ENCODE measurements at regions of chr3 and their contacts with region 1.

Region 1: DNA sequence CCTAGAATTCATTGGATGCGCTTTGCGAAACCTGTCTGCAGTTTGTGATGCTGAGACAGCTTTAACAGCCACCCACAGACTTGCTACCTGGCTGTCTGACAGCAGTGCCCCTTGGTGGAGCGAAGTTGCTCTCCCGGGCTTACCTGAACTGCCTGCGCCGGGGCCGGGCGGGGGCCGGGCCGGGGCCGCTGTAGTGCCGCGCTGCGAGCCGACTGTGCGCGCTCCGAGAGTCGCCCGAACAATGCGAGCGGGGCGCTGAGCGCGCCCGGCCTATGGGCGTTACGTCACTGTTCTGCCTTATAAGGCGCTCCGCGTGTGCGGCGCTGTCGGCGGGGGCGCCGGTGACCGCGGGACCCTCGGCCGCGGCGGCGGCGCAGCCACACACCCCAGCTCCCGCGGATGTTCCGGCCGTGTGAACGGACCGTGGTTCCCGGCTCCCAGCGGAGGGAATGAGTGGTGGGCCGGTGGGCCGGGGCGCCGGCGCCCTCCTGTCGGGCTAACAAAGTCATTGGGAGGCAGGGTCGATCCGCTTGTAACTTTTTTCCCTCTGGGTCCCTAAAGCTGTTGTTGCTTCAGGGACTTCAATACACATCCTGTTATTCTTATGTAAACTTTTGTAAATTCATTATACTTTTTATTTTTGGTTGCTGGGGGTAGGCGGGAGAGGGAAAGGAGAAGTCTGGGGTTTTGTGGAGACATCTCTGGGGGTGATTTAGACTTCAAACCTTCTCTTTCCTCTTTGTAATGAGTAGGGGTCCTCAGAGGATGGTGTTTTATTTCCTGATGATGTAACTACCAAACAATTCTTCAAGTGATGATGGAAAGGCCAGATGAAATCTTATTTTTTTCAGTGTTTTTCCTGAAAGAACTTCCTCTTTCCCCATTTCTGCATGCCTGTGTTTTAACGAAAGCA is 58.5 kb downstream of the CMSS1 start:
- DNase-seq: peak; percentile 74
- ATAC-seq: peak; percentile 99
- H3K4me3 ChIP-seq: peak overlapping the region; percentile 73 to 92 (median 83)
- H3K27ac ChIP-seq: peak overlapping the region; percentile 86
- H3K4me1 ChIP-seq: peaks cover 44% of the 10 kb centered on the region
- H3K27me3 ChIP-seq: no peaks in the 10 kb centered on the region; a peak in 1 of 5 replicates
- CTCF ChIP-seq: peak; percentile 64
- EP300 ChIP-seq: peak in 1 of 2 experiments; percentile 37; a peak in 2 of 4 replicates
- POLR2A ChIP-seq: peak; percentile 88 to 95
- RAD21 ChIP-seq: peak; percentile 86

Region 2: DNA sequence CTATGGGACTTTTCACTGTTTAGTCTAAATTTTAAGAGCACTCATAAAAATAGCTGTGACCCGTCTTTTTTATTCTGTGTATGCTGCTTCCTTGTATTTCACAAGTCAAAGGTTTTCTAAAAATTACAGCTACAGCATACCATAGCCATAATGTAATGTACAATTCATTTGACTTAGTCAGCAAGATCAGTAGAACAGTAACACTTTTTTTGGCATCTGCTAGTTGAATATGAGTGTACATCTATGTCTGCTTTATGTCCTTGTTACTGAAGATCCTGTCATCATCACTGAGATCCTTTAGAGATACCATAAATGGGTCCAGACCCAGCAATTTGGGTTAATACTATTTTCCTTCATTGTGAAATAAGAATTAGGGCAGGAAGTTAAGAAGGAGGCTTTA is 16.4 kb before region 1 on chr3:
- CTCF ChIA-PET with region 1: no interaction called
- POLR2A ChIA-PET with region 1: interaction called, 15 read pairs
- in situ Hi-C with region 1: no loop called
- intact Hi-C with region 1: no loop called
- DNase-seq: no peak
- ATAC-seq: no peak
- H3K4me3 ChIP-seq: no peak overlapping the region
- H3K27ac ChIP-seq: no peak overlapping the region
- H3K4me1 ChIP-seq: peaks cover 96% of the 10 kb centered on the region
- H3K27me3 ChIP-seq: no peaks in the 10 kb centered on the region
- CTCF ChIP-seq: no peak
- EP300 ChIP-seq: no peak
- POLR2A ChIP-seq: no peak
- RAD21 ChIP-seq: no peak

Region 3: GRCh38 chr3:99895703-99896441 is 19.7 kb after region 1 on chr3:
- CTCF ChIA-PET with region 1: no interaction called
- POLR2A ChIA-PET with region 1: interaction called, 18 read pairs
- in situ Hi-C with region 1: no loop called
- intact Hi-C with region 1: no loop called
- DNase-seq: peak; percentile 82
- ATAC-seq: peak; percentile 94
- H3K4me3 ChIP-seq: no peak overlapping the region
- H3K27ac ChIP-seq: peak overlapping the region; percentile 44
- H3K4me1 ChIP-seq: peaks cover 53% of the 10 kb centered on the region
- H3K27me3 ChIP-seq: no peaks in the 10 kb centered on the region
- CTCF ChIP-seq: no peak
- EP300 ChIP-seq: peak in 1 of 2 experiments; percentile 42; a peak in 1 of 4 replicates
- POLR2A ChIP-seq: no peak
- RAD21 ChIP-seq: no peak

Region 4: GRCh38 chr3:99920481-99921376 is 44.5 kb after region 1 on chr3:
- CTCF ChIA-PET with region 1: no interaction called
- POLR2A ChIA-PET with region 1: interaction called, 10 read pairs
- in situ Hi-C with region 1: no loop called
- intact Hi-C with region 1: loop called (anchors 2 kb)
- DNase-seq: peak; percentile 97
- ATAC-seq: peak; percentile 89
- H3K4me3 ChIP-seq: peak overlapping the region in 2 of 3 experiments; percentile 17 to 42; a peak in 1 of 6 replicates
- H3K27ac ChIP-seq: peak overlapping the region; percentile 94
- H3K4me1 ChIP-seq: peaks cover 100% of the 10 kb centered on the region
- H3K27me3 ChIP-seq: no peaks in the 10 kb centered on the region
- CTCF ChIP-seq: peak; percentile 47
- EP300 ChIP-seq: peak; percentile 39 to 95; a peak in 3 of 4 replicates
- POLR2A ChIP-seq: peak; percentile 28 to 58; a peak in 2 of 4 replicates
- RAD21 ChIP-seq: no peak

Region 5: GRCh38 chr3:100002599-100003350 is 126.6 kb after region 1 on chr3:
- CTCF ChIA-PET with region 1: no interaction called
- POLR2A ChIA-PET with region 1: interaction called, 4 read pairs
- in situ Hi-C with region 1: no loop called
- intact Hi-C with region 1: loop called (anchors 1 kb)
- DNase-seq: peak; percentile 91
- ATAC-seq: peak; percentile 95
- H3K4me3 ChIP-seq: no peak overlapping the region
- H3K27ac ChIP-seq: peak overlapping the region; percentile 8
- H3K4me1 ChIP-seq: peaks cover 52% of the 10 kb centered on the region
- H3K27me3 ChIP-seq: no peaks in the 10 kb centered on the region
- CTCF ChIP-seq: no peak
- EP300 ChIP-seq: 0 out of 4 replicates have a peak, but pooled peaks of 1 of the 2 experiments have one; percentile 44
- POLR2A ChIP-seq: no peak
- RAD21 ChIP-seq: no peak

Region 6: DNA sequence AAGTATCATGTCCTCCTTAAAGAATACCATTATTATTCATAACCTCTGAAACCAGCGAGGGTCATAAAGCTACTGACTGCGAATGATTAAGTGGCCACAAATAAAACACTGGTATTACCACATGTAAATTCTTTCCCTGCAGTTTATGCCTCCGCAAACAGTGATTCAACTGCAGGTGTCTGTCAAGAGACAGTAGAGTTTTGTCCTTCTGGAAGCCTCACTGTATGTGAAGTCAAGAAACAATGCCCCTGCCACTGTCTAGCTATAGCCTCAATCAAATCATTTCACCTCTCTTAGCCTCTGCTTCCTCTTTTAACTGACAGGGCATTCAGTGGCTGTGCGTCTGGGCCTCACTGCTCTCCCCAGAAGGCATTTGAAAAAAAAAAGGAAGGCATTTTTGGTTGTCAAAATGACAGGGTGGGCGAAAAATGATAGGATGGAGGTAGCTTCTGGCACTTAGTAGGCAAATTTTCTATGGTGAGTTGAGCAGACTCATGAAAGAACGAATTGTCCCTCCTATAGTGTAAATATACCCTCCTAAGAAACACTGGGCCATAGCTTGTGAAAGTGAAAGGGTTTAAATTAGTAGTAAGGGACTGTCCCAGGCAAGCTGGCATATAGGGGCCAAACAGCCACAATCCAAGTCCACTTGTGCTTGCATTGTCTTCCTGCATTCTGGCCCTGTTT is 171.4 kb after region 1 on chr3:
- CTCF ChIA-PET with region 1: no interaction called
- POLR2A ChIA-PET with region 1: no interaction called
- in situ Hi-C with region 1: loop called (anchors 10 kb)
- intact Hi-C with region 1: no loop called
- DNase-seq: peak; percentile 86
- ATAC-seq: peak; percentile 71
- H3K4me3 ChIP-seq: peak overlapping the region in 1 of 3 experiments; percentile 12; a peak in 1 of 6 replicates
- H3K27ac ChIP-seq: peak overlapping the region; percentile 48
- H3K4me1 ChIP-seq: peaks cover 26% of the 10 kb centered on the region
- H3K27me3 ChIP-seq: no peaks in the 10 kb centered on the region; a peak in 1 of 5 replicates
- CTCF ChIP-seq: no peak
- EP300 ChIP-seq: peak in 1 of 2 experiments; percentile 64; a peak in 1 of 4 replicates
- POLR2A ChIP-seq: no peak
- RAD21 ChIP-seq: no peak

Region 7: GRCh38 chr3:100060685-100061484 is 184.7 kb after region 1 on chr3:
- CTCF ChIA-PET with region 1: no interaction called
- POLR2A ChIA-PET with region 1: interaction called, 8 read pairs
- in situ Hi-C with region 1: no loop called
- intact Hi-C with region 1: loop called (anchors 5 kb)
- DNase-seq: no peak
- ATAC-seq: no peak
- H3K4me3 ChIP-seq: no peak overlapping the region
- H3K27ac ChIP-seq: no peak overlapping the region
- H3K4me1 ChIP-seq: peaks cover 71% of the 10 kb centered on the region
- H3K27me3 ChIP-seq: no peaks in the 10 kb centered on the region
- CTCF ChIP-seq: no peak
- EP300 ChIP-seq: no peak
- POLR2A ChIP-seq: no peak
- RAD21 ChIP-seq: no peak

Measured in HepG2 (cell line).